ENCODE measurements at regions of chr9 and their contacts with region 1.

Region 1: DNA sequence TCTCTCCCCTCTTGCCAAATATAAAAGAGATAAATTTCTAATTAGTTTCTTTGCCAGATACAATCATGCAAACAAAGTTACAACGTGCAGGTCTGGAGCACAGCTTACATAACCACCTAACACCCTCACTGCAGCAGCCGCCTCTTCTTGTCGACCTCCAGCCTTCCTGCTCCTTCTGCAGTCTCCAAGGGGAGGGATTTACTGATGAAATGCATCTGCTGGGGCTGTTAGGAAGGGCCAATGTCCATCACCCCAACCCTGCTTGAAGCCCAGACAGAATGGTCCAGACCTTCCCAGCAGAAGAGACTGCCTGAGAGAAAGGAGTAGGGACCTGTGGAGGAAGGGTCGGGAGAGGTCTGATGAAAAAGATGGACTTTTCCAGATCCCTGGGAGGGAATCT is 15.2 kb downstream of the KCNV2 start:
- DNase-seq: no peak
- ATAC-seq: no peak

Region 2: DNA sequence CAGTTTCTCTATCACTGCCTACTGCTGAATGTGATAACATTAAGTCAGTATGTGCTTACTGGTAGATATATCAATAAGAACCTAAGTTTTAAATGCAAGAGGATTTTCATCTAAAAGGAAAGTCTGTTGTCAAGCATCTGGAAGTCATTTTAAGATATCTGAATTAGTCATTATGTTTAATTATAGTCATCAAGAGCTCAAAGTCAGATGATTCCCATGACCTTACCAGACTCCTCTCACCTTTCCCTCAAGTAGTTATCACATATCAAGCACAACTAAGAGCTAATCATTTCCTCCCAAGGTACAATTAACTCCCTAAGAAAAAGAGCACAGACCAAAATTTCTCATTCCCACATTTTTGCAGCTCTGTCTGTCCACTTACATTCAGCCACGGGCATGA is 65.9 kb after region 1 on chr9:
- intact Hi-C with region 1: loop called (anchors 2 kb)
- DNase-seq: no peak
- ATAC-seq: no peak

Region 3: GRCh38 chr9:3367185-3367584 is 634.7 kb after region 1 on chr9:
- intact Hi-C with region 1: no loop called
- DNase-seq: no peak
- ATAC-seq: no peak